Activated CD4-positive, alpha-beta memory T cell treated with anti-CD3 and anti-CD28 coated beads for 36 hours (primary cell): ENCODE measurements at regions of chr5 and their contacts with region 1.

Region 1: GRCh38 chr5:41903892-41904799 is at the start of gene RIMOC1:
- DNase-seq: peak; percentile 99
- H3K4me3 Mint-ChIP-seq: peak within 1 kb of the TSS; percentile 91
- H3K27ac Mint-ChIP-seq: peak within 1 kb of the TSS; percentile 93
- H3K4me1 Mint-ChIP-seq: peaks cover 37% of the 10 kb centered on the region
- H3K27me3 Mint-ChIP-seq: peaks cover 2% of the 10 kb centered on the region
- total RNA-seq, gene RIMOC1: 25.0 to 25.8 TPM

Region 2: GRCh38 chr5:41683181-41683580 is 221.0 kb before region 1 on chr5:
- CTCF ChIA-PET with region 1: no interaction called
- POLR2A ChIA-PET with region 1: no interaction called
- intact Hi-C with region 1: no loop called
- DNase-seq: peak; percentile 14
- H3K4me3 Mint-ChIP-seq: no peak overlapping the region
- H3K27ac Mint-ChIP-seq: no peak overlapping the region
- H3K4me1 Mint-ChIP-seq: no peaks in the 10 kb centered on the region
- H3K27me3 Mint-ChIP-seq: peaks cover 4% of the 10 kb centered on the region

Region 3: GRCh38 chr5:41869739-41870626 is 34.2 kb before region 1 on chr5 and contains the start of gene OXCT1:
- CTCF ChIA-PET with region 1: interaction called, 4 read pairs
- POLR2A ChIA-PET with region 1: interaction called, 23 read pairs
- intact Hi-C with region 1: loop called (anchors 1 kb)
- DNase-seq: peak; percentile 95
- H3K4me3 Mint-ChIP-seq: peak within 1 kb of the TSS; percentile 92
- H3K27ac Mint-ChIP-seq: peak within 1 kb of the TSS; percentile 87
- H3K4me1 Mint-ChIP-seq: peaks cover 56% of the 10 kb centered on the region
- H3K27me3 Mint-ChIP-seq: no peaks in the 10 kb centered on the region
- total RNA-seq, gene OXCT1: 110 to 117 TPM

Region 4: DNA sequence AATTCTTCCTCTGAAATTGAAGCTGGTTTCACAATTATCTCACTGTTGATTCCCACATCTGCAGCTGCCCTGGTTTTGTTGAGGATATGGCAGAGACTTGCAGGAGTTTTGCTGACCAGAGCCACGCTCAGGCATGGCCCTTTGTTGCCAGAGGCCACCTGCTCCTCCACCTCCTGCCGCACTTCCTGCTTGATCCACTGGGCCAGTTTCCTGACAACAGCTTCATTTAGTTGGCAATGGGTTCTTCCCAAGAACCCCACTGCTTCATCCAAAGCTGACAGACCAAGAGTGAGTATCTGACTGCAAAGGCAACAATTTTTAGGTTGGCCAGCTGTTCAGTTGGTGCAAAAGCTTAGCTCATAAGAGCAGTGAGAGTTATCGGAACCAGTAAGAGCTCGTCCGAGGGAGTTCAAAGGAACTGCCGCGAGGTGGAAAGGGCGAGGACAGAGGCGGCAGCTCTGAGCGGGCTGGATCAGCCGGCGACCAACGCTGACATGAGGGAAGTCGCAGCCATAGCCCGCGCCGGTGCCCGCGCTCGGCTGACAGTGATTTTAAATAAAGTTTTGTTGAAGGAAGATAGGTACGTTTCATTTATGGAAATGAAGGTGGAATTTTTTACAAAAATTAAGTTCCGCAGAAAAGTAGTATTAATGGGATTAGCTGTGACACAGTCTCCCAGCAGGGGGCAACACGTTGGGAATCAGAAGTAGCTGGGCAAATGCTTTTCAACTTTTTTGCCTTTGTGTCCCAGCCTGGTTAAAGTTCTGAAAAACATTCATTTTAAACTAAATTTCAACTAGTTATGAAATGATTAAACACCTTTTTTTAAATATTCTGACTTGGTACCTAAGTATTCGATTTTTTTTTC is 63.9 kb after region 1 on chr5:
- CTCF ChIA-PET with region 1: no interaction called
- POLR2A ChIA-PET with region 1: no interaction called
- intact Hi-C with region 1: no loop called
- DNase-seq: no peak
- H3K4me3 Mint-ChIP-seq: no peak overlapping the region
- H3K27ac Mint-ChIP-seq: no peak overlapping the region
- H3K4me1 Mint-ChIP-seq: no peaks in the 10 kb centered on the region
- H3K27me3 Mint-ChIP-seq: peaks cover 7% of the 10 kb centered on the region